Activated CD4-positive, alpha-beta memory T cell treated with anti-CD3 and anti-CD28 coated beads for 36 hours (primary cell): ENCODE measurements at regions of chr4 and their contacts with region 1.

Region 1: DNA sequence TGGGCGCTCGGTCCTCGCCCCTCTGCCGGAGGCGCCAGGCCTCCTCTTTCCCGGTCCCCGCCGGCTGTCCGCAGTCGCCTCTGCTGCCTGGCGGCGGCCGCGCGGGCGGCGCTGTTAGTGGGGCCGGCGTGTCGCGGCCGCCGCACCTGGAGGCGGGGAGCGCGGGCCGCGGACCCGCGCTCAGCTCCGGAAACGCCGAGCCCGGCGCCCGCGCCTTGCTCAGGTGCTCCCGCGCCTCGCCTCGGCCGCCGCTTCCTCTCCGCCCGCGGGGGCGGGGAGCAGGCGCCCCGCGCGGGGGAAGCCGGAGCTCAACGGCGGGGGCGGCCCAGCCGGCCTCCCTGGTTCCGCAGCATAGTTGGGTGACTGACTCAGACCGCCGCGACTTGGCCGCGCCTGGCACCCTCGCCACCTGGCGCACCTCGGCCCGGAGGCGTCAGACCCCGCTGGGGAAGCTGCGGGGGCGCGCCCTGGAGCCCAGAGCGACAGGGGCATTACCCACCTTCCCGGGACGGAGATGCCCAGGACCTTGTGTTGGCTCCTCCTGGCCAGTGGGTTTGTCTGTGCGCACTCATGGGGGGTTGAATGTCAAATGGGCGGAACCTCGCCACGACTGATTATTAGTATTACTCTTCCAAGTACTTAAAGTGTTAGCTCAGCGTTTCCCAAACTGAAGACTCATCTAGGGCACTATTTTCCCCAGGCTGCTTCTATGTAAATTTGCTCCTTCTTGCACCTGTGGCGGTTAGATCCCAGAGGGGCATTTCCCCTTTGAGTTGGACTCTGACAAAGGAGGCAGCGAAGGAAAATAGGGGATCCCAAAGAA is at the start of gene ARAP2:
- DNase-seq: peak; percentile 86
- H3K4me3 Mint-ChIP-seq: peak within 1 kb of the TSS; percentile 97
- H3K27ac Mint-ChIP-seq: peak within 1 kb of the TSS; percentile 94
- H3K4me1 Mint-ChIP-seq: peaks cover 42% of the 10 kb centered on the region
- H3K27me3 Mint-ChIP-seq: no peaks in the 10 kb centered on the region
- total RNA-seq, gene ARAP2: 49.3 to 57.7 TPM

Region 2: GRCh38 chr4:36086261-36086786 is 158.1 kb before region 1 on chr4:
- CTCF ChIA-PET with region 1: no interaction called
- POLR2A ChIA-PET with region 1: no interaction called
- intact Hi-C with region 1: loop called (anchors 1 kb)
- DNase-seq: no peak
- H3K4me3 Mint-ChIP-seq: no peak overlapping the region
- H3K27ac Mint-ChIP-seq: peak overlapping the region; percentile 1
- H3K4me1 Mint-ChIP-seq: peaks cover 15% of the 10 kb centered on the region
- H3K27me3 Mint-ChIP-seq: no peaks in the 10 kb centered on the region

Region 3: GRCh38 chr4:36255577-36255976 is 11.1 kb after region 1 on chr4:
- CTCF ChIA-PET with region 1: interaction called, 25 read pairs
- POLR2A ChIA-PET with region 1: interaction called, 41 read pairs
- intact Hi-C with region 1: loop called (anchors 1 kb)
- DNase-seq: peak; percentile 75
- H3K4me3 Mint-ChIP-seq: peak overlapping the region; percentile 65
- H3K27ac Mint-ChIP-seq: peak overlapping the region; percentile 95
- H3K4me1 Mint-ChIP-seq: peaks cover 44% of the 10 kb centered on the region
- H3K27me3 Mint-ChIP-seq: no peaks in the 10 kb centered on the region

Region 4: GRCh38 chr4:36320117-36320896 is 75.8 kb after region 1 on chr4:
- CTCF ChIA-PET with region 1: interaction called, 11 read pairs
- POLR2A ChIA-PET with region 1: interaction called, 14 read pairs
- intact Hi-C with region 1: loop called (anchors 1 kb)
- DNase-seq: no peak
- H3K4me3 Mint-ChIP-seq: no peak overlapping the region
- H3K27ac Mint-ChIP-seq: peak overlapping the region; percentile 67
- H3K4me1 Mint-ChIP-seq: peaks cover 79% of the 10 kb centered on the region
- H3K27me3 Mint-ChIP-seq: no peaks in the 10 kb centered on the region

Region 5: GRCh38 chr4:36351082-36351666 is 106.7 kb after region 1 on chr4:
- CTCF ChIA-PET with region 1: interaction called, 5 read pairs
- POLR2A ChIA-PET with region 1: interaction called, 6 read pairs
- intact Hi-C with region 1: loop called (anchors 1 kb)
- DNase-seq: peak; percentile 85
- H3K4me3 Mint-ChIP-seq: no peak overlapping the region
- H3K27ac Mint-ChIP-seq: no peak overlapping the region
- H3K4me1 Mint-ChIP-seq: peaks cover 29% of the 10 kb centered on the region
- H3K27me3 Mint-ChIP-seq: no peaks in the 10 kb centered on the region

Region 6: GRCh38 chr4:36551697-36552214 is 307.3 kb after region 1 on chr4:
- CTCF ChIA-PET with region 1: no interaction called
- POLR2A ChIA-PET with region 1: no interaction called
- intact Hi-C with region 1: loop called (anchors 10 kb)
- DNase-seq: peak; percentile 60
- H3K4me3 Mint-ChIP-seq: no peak overlapping the region
- H3K27ac Mint-ChIP-seq: peak overlapping the region; percentile 53
- H3K4me1 Mint-ChIP-seq: peaks cover 7% of the 10 kb centered on the region
- H3K27me3 Mint-ChIP-seq: peaks cover 2% of the 10 kb centered on the region